CD14-positive monocyte (primary cell): ENCODE measurements at regions of chr1 and their contacts with region 1.

Region 1: GRCh38 chr1:230149751-230150584 is 82.9 kb downstream of the GALNT2 start:
- DNase-seq: peak; percentile 48 to 65 (median 50)
- H3K4me3 ChIP-seq: peak overlapping the region; percentile 34 to 65 (median 39)
- H3K4me3 Mint-ChIP-seq: peak overlapping the region; percentile 72 to 76
- H3K27ac ChIP-seq: peak overlapping the region; percentile 84 to 86
- H3K27ac Mint-ChIP-seq: peak overlapping the region; percentile 86 to 97 (median 91)
- H3K4me1 ChIP-seq: peaks cover 86 to 94% of the 10 kb centered on the region in 2 donors
- H3K4me1 Mint-ChIP-seq: peaks cover 94% of the 10 kb centered on the region
- H3K27me3 ChIP-seq: no peaks in the 10 kb centered on the region
- H3K27me3 Mint-ChIP-seq: no peaks in the 10 kb centered on the region
- CTCF ChIP-seq: no peak

Region 2: DNA sequence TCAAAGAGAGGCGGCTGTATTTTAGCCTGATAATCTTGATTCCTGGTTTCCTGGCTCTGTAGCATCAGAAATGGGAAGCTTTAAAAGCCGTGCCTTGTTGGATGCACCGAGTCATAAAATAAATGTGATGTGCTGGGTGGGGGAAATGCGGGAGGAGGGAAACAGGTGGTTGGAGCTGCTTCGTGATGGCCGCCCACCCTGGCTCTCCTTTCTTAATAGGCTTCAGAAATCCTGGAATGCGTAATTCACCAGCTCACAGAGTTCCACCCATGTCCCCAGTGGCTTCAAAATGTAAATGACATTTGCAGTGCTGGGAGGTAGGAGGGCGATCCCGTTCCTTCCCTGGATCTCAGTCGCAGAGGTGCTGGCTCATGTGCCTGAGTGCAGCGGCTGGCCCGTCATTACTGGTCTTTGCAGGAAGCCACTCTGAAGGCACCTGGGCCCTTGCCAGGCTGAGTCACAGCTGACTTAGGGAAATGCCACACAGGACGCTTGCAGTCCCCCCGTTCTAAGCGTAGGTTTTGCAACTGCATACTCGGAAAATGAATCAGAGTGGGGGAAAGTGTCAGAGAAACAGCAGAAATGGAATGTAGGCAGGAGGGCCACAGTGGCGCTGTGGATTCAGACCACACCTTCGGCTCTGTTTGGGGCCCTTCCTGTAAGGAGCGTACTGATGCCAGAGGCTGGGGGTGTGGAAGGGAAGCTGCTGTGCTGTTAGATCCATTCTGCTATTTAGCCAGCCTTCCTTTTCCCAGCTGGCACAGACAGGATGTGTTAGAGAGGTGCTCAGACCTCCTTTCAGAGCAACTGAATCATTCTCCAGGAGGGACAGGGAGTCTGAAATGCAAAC is 45.3 kb before region 1 on chr1:
- intact Hi-C with region 1: loop called in 1 of 2 experiments (anchors 5 kb)
- DNase-seq: peak; percentile 79 to 96 (median 87)
- H3K4me3 ChIP-seq: peak overlapping the region in 1 of 3 experiments; percentile 51
- H3K4me3 Mint-ChIP-seq: peak overlapping the region; percentile 9 to 73
- H3K27ac ChIP-seq: peak overlapping the region; percentile 9 to 65
- H3K27ac Mint-ChIP-seq: peak overlapping the region; percentile 40 to 92 (median 85)
- H3K4me1 ChIP-seq: peaks cover 41 to 53% of the 10 kb centered on the region in 2 donors
- H3K4me1 Mint-ChIP-seq: peaks cover 60% of the 10 kb centered on the region
- H3K27me3 ChIP-seq: no peaks in the 10 kb centered on the region
- H3K27me3 Mint-ChIP-seq: peaks cover 0 to 3% (median 0%) of the 10 kb centered on the region in 3 donors
- CTCF ChIP-seq: no peak

Region 3: DNA sequence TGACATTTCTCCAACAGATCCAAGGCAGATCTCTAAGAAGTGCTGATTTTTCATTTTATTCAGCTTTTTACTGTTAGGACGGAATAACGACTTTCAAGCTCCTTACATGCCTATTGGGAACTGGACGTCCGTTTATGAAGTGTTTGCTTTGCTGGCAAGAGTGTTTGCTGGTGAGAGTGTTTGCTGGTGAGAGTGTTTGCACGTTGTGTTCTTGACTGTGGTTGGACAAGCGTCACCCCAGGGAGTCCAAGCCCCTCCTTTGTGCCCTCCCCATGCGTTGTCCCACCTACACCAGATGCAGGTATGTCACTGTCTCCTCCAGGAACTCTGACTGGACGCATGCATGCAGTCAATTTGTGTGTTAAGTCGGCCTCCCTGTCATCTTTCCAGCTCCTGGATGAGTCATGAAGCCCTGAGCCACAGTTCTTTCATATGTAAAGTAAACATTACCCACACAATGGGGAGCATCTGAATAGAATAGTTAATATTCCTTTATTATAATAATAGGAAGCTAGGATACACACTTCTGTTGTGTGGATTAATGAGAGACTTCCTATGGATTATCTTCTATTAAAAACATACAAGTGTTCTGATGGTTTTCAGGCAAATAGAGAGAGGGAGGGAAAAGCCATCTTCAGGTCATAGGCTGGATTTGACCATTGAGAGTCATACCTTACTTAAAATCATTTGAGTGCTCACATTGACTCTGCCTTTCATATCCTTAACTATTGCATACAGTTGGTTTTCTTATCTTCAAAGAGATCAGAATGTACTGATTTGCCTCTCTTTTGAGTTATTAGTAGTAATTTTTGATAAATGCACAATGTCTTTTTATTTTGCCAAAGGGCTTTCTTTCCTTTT is 36.3 kb after region 1 on chr1:
- intact Hi-C with region 1: loop called in 1 of 2 experiments (anchors 5 kb)
- DNase-seq: no peak
- H3K4me3 ChIP-seq: no peak overlapping the region
- H3K4me3 Mint-ChIP-seq: no peak overlapping the region
- H3K27ac ChIP-seq: peak overlapping the region in 1 of 2 donors; percentile 39
- H3K27ac Mint-ChIP-seq: peak overlapping the region in 3 of 7 donors; percentile 20 to 54 (median 49)
- H3K4me1 ChIP-seq: peaks cover 25 to 37% of the 10 kb centered on the region in 2 donors
- H3K4me1 Mint-ChIP-seq: peaks cover 40% of the 10 kb centered on the region
- H3K27me3 ChIP-seq: no peaks in the 10 kb centered on the region
- H3K27me3 Mint-ChIP-seq: peaks cover 0 to 1% (median 0%) of the 10 kb centered on the region in 3 donors
- CTCF ChIP-seq: no peak

Region 4: DNA sequence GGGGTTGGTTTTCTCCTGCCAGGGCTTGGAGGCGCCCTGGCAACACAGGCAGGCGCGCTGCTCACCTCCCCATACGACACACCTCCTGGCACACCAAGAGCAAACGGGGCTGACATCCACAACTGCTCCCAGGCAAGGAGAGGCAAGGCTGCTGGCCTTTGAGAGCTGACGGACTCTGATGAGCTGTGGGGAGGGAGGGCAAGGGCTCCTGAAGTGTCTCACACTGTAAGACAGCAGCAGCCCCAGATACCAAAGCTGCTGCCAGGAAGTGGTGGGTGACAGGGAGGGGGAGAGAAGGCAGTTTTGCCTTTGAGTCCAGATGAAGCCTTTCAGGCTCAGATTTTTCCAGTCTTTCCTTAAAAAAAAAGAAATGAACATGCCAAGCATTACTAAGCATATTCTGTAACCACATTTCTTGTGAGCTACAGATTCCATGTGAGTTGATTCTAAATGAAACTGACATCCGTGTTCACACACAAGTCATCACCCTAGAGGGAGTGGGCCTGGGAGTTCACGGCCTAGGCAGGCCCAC is 251.9 kb after region 1 on chr1:
- intact Hi-C with region 1: no loop called
- DNase-seq: no peak
- H3K4me3 ChIP-seq: no peak overlapping the region
- H3K4me3 Mint-ChIP-seq: no peak overlapping the region
- H3K27ac ChIP-seq: no peak overlapping the region
- H3K27ac Mint-ChIP-seq: no peak overlapping the region
- H3K4me1 ChIP-seq: no peaks in the 10 kb centered on the region
- H3K4me1 Mint-ChIP-seq: no peaks in the 10 kb centered on the region
- H3K27me3 ChIP-seq: no peaks in the 10 kb centered on the region
- H3K27me3 Mint-ChIP-seq: peaks cover 0 to 6% (median 0%) of the 10 kb centered on the region in 3 donors
- CTCF ChIP-seq: no peak